ENCODE measurements at regions of chr10 and their contacts with region 1.

Region 1: GRCh38 chr10:79445141-79445976 is at the start of gene ZCCHC24:
- DNase-seq: peak; percentile 99
- H3K4me3 ChIP-seq: peak within 1 kb of the TSS; percentile 57 to 92
- H3K27ac ChIP-seq: peak within 1 kb of the TSS; percentile 95 to 99
- H3K4me1 ChIP-seq: peaks cover 0 to 12% of the 10 kb centered on the region in 2 donors
- H3K27me3 ChIP-seq: no peaks in the 10 kb centered on the region
- CTCF ChIP-seq: peak in 1 of 4 experiments; percentile 62
- POLR2A ChIP-seq: peak; percentile 95 to 99
- total RNA-seq, gene ZCCHC24: 32.8 to 122 (median 37.7) TPM

Region 2: GRCh38 chr10:79399223-79399831 is 46.0 kb before region 1 on chr10:
- intact Hi-C with region 1: loop called (anchors 2 kb)
- DNase-seq: peak; percentile 94 to 96
- H3K4me3 ChIP-seq: no peak overlapping the region
- H3K27ac ChIP-seq: no peak overlapping the region
- H3K4me1 ChIP-seq: peaks cover 47 to 59% of the 10 kb centered on the region in 2 donors
- H3K27me3 ChIP-seq: no peaks in the 10 kb centered on the region
- CTCF ChIP-seq: no peak
- POLR2A ChIP-seq: peak; percentile 10 to 28

Region 3: DNA sequence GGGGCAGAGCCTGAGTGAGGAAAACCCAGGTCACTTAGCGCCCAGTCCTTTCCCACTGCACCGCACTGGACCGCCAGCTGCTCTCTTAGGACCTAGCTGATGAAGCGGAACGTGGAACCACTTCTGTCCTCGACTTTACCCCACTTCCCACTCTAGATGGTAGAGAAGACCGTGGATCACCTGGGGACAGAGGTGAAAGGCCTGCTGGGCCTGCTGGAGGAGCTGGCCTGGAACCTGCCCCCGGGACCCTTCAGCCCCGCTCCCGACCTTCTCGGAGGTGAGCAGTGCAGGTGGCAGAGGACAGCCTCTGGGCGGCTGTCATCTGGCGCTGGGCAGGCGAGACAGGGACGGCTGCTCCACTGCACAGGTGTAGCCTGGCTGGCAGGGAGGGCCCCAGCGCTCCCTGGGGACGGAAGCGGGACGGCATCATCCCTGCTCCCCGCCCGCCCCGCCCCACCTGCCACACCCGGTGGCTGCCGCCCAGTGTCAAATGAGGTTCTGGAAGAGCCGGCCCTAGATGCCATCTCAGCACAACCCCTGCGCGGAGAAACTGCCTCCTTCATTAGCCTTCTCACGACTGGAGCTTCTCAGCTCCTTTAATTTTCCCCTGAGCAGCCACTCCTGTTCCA is 698.8 kb after region 1 on chr10:
- intact Hi-C with region 1: no loop called
- DNase-seq: no peak
- H3K4me3 ChIP-seq: no peak overlapping the region
- H3K27ac ChIP-seq: peak overlapping the region in 1 of 2 donors; percentile 10
- H3K4me1 ChIP-seq: peaks cover 5 to 6% of the 10 kb centered on the region in 2 donors
- H3K27me3 ChIP-seq: no peaks in the 10 kb centered on the region
- CTCF ChIP-seq: no peak
- POLR2A ChIP-seq: no peak

Measured in uterus (tissue), 4 donors.